Left colon (tissue), 2 donors: ENCODE measurements at regions of chr1 and their contacts with region 1.

Region 1: GRCh38 chr1:197521118-197521739 is 253.2 kb downstream of the CRB1 start:
- DNase-seq: no peak
- ATAC-seq: peak; percentile 27

Region 2: DNA sequence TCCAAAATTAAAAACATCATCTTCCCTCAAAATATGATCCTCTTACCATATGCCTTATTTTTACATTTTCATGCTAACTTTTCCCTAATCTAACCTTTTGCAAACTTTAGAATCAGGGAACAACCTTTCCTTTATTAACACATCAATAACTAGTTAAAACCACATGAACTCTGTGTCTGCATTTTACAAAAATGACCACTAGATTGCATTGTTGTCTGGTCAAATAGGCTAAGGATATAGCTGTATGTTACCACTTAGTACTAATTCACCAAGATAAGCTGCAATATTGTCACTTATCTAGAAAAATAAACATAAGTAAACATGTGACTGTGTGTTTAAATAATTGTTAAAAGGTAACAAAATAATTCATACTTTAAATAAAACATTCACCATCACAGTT is 171.7 kb after region 1 on chr1:
- intact Hi-C with region 1: no loop called
- DNase-seq: no peak
- ATAC-seq: peak; percentile 50

Region 3: GRCh38 chr1:197924516-197925123 is 403.4 kb after region 1 on chr1:
- intact Hi-C with region 1: loop called in 1 of 2 experiments (anchors 10 kb)
- DNase-seq: peak in 1 of 2 donors; percentile 29
- ATAC-seq: peak; percentile 61